Activated CD8-positive, alpha-beta T cell treated with anti-CD3 and anti-CD28 coated beads for 36 hours (primary cell): ENCODE measurements at regions of chr7 and their contacts with region 1.

Region 1: DNA sequence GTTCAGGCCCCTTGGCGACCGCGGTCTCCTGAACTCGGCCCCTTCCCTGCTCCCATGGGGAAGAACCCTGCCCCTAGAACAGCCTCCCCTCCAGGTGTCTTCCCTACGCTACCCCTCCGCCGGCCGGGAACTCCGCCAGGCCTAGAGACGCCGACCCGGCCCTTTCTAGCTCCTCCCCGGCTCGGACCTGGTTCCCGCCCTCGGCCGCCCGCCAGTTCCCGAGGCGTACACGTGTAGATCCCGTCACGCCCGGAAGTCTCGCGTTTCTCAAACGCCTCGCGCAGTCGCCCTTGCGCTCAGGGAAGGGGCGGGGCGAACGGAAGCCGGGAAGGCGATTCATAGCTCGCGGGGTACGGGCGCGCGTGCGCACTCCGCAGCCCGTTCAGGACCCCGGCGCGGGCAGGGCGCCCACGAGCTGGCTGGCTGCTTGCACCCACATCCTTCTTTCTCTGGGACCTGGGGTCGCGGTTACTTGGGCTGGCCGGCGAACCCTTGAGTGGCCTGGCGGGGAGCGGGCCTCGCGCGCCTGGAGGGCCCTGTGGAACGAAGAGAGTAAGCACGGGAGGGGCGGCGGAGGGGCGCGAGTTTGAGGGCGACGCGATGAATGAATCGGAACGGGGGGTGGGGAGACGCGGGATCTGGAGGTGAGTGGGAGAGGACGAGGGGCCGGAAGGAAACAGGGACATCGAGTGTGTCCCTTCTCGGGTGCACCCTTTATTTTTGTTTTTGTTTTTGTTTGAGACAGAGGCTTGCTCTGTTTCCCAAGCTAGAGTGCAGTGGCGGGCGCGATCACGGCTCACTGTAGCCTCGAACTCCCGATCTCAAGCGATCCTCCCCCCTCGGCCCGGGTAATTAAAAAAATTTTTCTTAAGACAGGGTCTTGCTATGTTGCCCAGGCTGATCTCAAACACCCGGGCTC is at the start of gene POP7:
- DNase-seq: peak; percentile 100
- ATAC-seq: peak; percentile 96
- H3K4me3 Mint-ChIP-seq: peak within 1 kb of the TSS; percentile 97
- H3K27ac Mint-ChIP-seq: peak within 1 kb of the TSS; percentile 93
- H3K4me1 Mint-ChIP-seq: peaks cover 6% of the 10 kb centered on the region
- H3K27me3 Mint-ChIP-seq: no peaks in the 10 kb centered on the region
- CTCF ChIP-seq: no peak
- total RNA-seq, gene POP7: 47.4 to 48.1 TPM

Region 2: DNA sequence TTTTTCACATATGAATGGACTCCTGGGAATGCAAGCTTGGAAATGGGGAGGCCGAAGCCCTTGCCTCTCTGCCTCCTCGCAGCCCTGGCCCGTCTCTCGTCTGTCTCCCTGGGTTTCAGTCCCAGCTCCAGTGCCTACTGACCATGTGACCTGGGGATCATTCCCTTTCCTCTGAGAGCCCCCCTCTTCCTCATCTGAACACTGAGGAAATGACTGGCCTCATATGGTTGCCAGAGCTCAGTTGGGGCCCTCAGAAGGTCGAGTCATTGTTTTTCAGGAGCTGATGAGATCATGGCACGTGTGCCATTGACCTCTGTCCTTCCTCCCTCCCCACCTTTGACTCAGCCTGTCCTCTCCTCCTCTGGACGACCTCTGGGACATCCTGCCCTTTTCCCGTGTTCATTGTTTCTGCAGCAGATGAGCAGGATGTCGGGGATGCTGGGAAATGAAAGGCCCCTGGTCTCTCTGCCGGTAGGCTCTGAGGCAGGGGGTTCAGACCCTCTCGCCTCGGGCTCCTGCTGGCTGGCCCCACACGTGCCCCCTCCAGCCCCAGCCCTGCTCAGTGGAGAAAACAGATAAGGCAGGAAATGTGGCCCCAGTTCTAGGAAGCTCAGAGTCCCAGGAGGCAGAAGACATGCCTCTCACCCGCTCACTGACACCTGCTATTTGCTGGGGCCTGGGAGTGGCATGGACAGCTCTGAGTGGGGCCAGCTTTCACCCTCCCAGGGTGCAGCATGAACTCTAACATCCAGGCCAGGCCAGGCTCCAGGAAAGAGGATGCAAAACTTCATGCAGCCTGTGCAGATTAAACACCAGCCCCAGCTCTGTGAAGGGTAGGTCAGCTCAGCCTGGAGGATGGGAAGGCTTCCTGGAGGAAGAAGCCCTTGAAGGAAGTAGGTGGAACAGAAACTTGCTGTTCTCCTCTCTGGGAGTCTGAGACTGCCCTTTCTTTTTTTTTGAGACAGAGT is 261.4 kb before region 1 on chr7:
- CTCF ChIA-PET with region 1: interaction called, 11 read pairs
- POLR2A ChIA-PET with region 1: no interaction called
- intact Hi-C with region 1: no loop called
- DNase-seq: peak; percentile 53
- ATAC-seq: peak; percentile 80
- H3K4me3 Mint-ChIP-seq: peak overlapping the region; percentile 31
- H3K27ac Mint-ChIP-seq: peak overlapping the region; percentile 82
- H3K4me1 Mint-ChIP-seq: peaks cover 16% of the 10 kb centered on the region
- H3K27me3 Mint-ChIP-seq: no peaks in the 10 kb centered on the region
- CTCF ChIP-seq: no peak

Region 3: DNA sequence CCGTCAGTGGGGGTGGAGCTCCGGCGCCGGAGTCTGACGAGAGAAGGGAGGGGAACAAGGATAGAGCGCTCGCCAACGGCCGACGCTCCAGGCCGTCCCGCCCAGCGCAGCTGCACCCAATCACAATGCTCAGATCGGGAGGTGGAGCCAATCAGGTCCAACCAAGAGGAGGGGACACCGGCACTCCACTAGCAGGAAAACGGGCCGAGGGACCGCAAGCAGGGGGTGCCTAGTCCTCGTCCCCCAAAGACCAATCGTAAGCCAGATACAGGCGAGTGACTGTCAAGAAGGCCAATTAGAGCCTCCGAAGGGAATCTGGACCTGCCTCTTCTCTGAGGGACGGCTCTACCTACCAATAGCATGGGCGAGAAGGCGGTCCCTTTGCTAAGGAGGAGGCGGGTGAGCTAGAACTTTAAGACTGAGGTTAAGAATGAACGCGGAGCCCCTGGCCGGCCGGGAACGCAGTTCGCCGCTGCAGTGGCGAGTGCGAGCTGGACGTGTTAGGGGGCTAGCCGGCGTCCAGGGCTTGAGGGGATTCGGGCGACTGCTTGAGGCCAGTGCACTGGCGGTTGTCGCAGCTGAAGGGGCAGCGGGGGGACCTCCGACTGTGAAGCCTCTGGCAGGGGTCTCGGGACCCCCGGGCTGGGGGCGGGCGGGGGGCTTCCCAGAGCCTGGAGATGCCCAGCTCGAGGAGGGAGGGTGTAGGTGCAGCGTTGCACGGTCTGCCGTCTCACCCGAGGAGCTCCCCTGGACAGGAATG is 119.6 kb before region 1 on chr7 and contains the start of gene FBXO24:
- CTCF ChIA-PET with region 1: interaction called, 16 read pairs
- POLR2A ChIA-PET with region 1: interaction called, 13 read pairs
- intact Hi-C with region 1: no loop called
- DNase-seq: peak; percentile 99
- ATAC-seq: peak; percentile 84
- H3K4me3 Mint-ChIP-seq: peak within 1 kb of the TSS; percentile 98
- H3K27ac Mint-ChIP-seq: peak within 1 kb of the TSS; percentile 93
- H3K4me1 Mint-ChIP-seq: peaks cover 20% of the 10 kb centered on the region
- H3K27me3 Mint-ChIP-seq: peaks cover 5% of the 10 kb centered on the region
- CTCF ChIP-seq: no peak
- total RNA-seq, gene FBXO24: 1.4 to 1.5 TPM

Region 4: DNA sequence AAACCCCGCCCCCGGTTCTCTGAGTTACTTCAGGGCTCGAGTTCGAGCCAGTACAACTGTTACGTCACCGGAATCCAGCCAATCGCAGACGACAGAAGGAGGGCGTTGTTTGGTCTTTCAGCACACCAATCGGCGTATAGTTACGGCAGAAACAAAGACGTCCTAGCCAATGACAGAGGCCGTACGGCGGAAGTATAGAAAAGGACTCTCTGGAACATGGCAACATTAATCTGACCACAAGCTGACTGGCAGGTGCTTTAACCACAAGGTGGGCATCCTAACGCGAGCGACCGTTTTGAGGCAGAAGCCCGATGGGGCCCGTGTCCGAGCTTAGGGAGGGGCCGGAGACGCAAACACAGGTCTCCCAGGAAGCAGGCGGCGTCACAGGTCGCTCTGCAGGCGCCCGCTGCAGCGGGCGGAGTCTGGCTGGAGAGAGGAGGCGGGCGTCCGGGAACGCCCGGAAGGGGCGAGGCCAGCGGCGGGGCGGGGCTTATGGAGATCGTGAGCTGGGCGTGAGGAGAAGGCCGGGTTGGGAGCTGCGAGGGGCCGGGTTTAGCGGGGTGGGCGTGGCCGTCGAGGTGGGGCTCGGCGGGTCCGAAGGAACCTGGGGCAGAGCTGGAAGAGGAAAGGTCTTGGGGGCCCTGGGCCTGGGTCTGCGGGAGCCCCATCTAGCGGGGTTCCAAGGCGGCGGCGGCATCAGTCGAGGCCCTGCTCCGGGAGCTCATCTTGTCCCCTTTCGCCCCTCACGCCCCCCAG is 93.9 kb before region 1 on chr7 and contains the start of gene MOSPD3:
- CTCF ChIA-PET with region 1: interaction called, 14 read pairs
- POLR2A ChIA-PET with region 1: interaction called, 3 read pairs
- intact Hi-C with region 1: no loop called
- DNase-seq: peak; percentile 99
- ATAC-seq: peak; percentile 94
- H3K4me3 Mint-ChIP-seq: peak within 1 kb of the TSS; percentile 88
- H3K27ac Mint-ChIP-seq: peak within 1 kb of the TSS; percentile 100
- H3K4me1 Mint-ChIP-seq: peaks cover 9% of the 10 kb centered on the region
- H3K27me3 Mint-ChIP-seq: no peaks in the 10 kb centered on the region
- CTCF ChIP-seq: no peak
- total RNA-seq, gene MOSPD3: 9.6 to 10.5 TPM

Region 5: DNA sequence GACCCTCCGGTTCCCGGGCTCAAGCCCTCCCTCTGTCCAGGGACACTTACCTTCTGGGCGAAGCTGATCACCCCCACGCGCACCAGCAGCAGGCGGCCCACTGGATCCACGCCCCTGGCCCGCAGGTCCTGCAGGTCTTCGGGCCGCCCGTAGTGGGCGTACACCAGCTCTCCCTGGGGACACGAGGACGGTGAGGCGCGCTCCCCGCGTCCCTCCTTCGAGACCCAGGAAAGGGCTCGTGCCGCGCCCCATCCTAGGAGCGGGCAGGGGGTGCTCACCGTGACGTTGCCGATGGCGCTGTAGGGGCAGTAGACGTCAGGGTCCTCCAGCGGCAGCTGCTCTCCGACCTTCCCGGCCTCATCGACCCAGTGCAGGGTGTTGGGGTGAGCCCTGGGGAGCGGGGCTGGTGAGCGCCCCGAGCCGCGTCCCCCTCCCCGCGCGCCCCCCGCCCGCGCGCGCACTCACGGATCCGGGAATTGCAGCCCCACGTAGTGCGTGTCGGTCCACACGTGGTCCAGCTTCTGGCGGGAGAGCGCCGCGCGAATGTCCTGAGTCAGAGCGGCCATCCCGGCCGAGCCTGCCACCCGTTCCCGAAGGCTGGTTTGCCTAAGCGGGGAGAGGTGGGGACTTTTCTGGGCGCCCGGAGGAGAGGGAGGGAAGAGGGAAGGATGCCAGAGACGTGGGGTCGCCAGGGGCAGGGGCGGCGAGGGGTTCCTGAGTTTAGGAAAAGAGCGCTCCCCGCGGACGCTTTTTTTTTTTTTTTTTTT is 72.9 kb before region 1 on chr7:
- CTCF ChIA-PET with region 1: interaction called, 17 read pairs
- POLR2A ChIA-PET with region 1: interaction called, 5 read pairs
- intact Hi-C with region 1: no loop called
- DNase-seq: peak; percentile 73
- ATAC-seq: peak; percentile 77
- H3K4me3 Mint-ChIP-seq: peak overlapping the region; percentile 82
- H3K27ac Mint-ChIP-seq: peak overlapping the region; percentile 93
- H3K4me1 Mint-ChIP-seq: peaks cover 23% of the 10 kb centered on the region
- H3K27me3 Mint-ChIP-seq: peaks cover 4% of the 10 kb centered on the region
- CTCF ChIP-seq: peak; percentile 51

Region 6: GRCh38 chr7:100691676-100692577 is 14.1 kb before region 1 on chr7:
- CTCF ChIA-PET with region 1: interaction called, 162 read pairs
- POLR2A ChIA-PET with region 1: interaction called, 22 read pairs
- intact Hi-C with region 1: no loop called
- DNase-seq: peak; percentile 88
- ATAC-seq: peak; percentile 77
- H3K4me3 Mint-ChIP-seq: peak overlapping the region; percentile 88
- H3K27ac Mint-ChIP-seq: peak overlapping the region; percentile 91
- H3K4me1 Mint-ChIP-seq: peaks cover 54% of the 10 kb centered on the region
- H3K27me3 Mint-ChIP-seq: no peaks in the 10 kb centered on the region
- CTCF ChIP-seq: peak; percentile 90

Region 7: GRCh38 chr7:100763556-100764140 is 57.6 kb after region 1 on chr7:
- CTCF ChIA-PET with region 1: no interaction called
- POLR2A ChIA-PET with region 1: no interaction called
- intact Hi-C with region 1: no loop called
- DNase-seq: no peak
- ATAC-seq: no peak
- H3K4me3 Mint-ChIP-seq: no peak overlapping the region
- H3K27ac Mint-ChIP-seq: no peak overlapping the region
- H3K4me1 Mint-ChIP-seq: no peaks in the 10 kb centered on the region
- H3K27me3 Mint-ChIP-seq: no peaks in the 10 kb centered on the region
- CTCF ChIP-seq: no peak

Region 8: DNA sequence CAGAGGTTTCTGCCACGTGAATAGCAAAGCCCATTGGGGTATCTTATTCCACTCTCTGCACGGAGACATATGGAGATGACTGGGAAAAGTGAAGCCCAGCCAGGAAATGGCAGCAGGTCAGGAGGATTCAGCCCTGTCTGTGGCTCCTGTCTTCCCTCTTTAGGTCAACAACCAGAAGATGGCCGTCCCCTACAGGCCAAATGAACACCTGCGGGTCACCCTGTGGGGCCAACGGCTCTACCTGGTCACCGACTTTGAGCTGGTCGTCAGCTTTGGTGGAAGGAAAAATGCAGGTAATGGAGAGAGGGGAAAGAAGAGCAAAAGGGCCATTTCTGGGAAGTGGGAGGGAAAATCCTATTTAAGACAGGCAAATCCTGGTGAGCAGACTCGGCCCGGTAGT is 83.0 kb after region 1 on chr7:
- CTCF ChIA-PET with region 1: no interaction called
- POLR2A ChIA-PET with region 1: no interaction called
- intact Hi-C with region 1: no loop called
- DNase-seq: no peak
- ATAC-seq: no peak
- H3K4me3 Mint-ChIP-seq: no peak overlapping the region
- H3K27ac Mint-ChIP-seq: no peak overlapping the region
- H3K4me1 Mint-ChIP-seq: peaks cover 2% of the 10 kb centered on the region
- H3K27me3 Mint-ChIP-seq: peaks cover 3% of the 10 kb centered on the region
- CTCF ChIP-seq: no peak

Region 9: GRCh38 chr7:100827330-100828227 is 121.6 kb after region 1 on chr7 and contains the start of gene EPHB4:
- CTCF ChIA-PET with region 1: no interaction called
- POLR2A ChIA-PET with region 1: no interaction called
- intact Hi-C with region 1: no loop called
- DNase-seq: peak; percentile 17
- ATAC-seq: peak; percentile 57
- H3K4me3 Mint-ChIP-seq: peak within 1 kb of the TSS; percentile 51
- H3K27ac Mint-ChIP-seq: no peak within 1 kb of the TSS
- H3K4me1 Mint-ChIP-seq: peaks cover 17% of the 10 kb centered on the region
- H3K27me3 Mint-ChIP-seq: peaks cover 33% of the 10 kb centered on the region
- CTCF ChIP-seq: peak; percentile 16
- total RNA-seq, gene EPHB4: 4.8 to 5.8 TPM

Region 10: DNA sequence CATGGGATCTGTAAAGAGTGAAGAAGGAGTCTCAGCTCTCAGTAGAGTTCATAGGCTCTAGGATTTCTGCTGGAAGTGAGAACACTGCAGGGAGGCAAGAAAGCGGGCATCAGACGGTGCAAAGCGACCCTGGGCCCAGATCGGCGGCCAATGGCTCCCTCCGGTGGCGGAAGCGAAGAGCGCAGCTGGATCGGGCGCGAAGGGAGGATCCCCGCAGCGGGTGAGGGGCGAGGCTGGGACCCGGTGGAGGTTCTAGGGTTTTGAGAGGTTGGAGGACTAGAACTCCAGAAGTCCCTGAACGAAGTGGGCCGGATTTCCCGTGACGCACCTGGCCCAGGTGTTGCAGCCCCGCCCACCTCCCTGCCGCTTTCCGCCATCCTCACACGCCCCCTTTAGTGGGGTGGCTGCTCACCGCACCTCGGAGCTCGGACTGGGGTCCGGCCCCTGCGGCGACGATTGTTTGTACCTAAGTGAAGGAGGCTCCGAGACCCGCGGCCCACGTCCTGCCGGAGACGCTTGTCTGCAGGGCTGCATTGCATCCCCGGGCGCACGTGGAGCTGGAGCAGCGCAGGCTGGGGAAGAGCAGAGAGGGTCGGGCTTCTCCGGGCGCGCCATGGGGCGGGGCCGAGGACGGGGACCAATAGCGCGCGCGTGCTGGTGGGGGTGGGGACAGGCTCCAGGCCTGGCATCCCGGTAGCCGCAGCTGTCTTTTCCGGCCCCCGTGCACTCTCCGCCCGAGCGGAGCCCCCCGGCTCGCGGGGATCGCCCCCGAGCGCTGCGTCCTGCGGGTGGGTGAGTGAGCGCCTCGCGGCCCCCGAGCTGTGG is 146.2 kb after region 1 on chr7 and contains the start of gene SLC12A9:
- CTCF ChIA-PET with region 1: interaction called, 50 read pairs
- POLR2A ChIA-PET with region 1: interaction called, 6 read pairs
- intact Hi-C with region 1: no loop called
- DNase-seq: peak; percentile 92
- ATAC-seq: peak; percentile 98
- H3K4me3 Mint-ChIP-seq: peak within 1 kb of the TSS; percentile 90
- H3K27ac Mint-ChIP-seq: peak within 1 kb of the TSS; percentile 77
- H3K4me1 Mint-ChIP-seq: peaks cover 15% of the 10 kb centered on the region
- H3K27me3 Mint-ChIP-seq: no peaks in the 10 kb centered on the region
- CTCF ChIP-seq: peak; percentile 95
- total RNA-seq, gene SLC12A9: 10.2 to 11.3 TPM